ENCODE measurements at regions of chr15 and their contacts with region 1.

Region 1: DNA sequence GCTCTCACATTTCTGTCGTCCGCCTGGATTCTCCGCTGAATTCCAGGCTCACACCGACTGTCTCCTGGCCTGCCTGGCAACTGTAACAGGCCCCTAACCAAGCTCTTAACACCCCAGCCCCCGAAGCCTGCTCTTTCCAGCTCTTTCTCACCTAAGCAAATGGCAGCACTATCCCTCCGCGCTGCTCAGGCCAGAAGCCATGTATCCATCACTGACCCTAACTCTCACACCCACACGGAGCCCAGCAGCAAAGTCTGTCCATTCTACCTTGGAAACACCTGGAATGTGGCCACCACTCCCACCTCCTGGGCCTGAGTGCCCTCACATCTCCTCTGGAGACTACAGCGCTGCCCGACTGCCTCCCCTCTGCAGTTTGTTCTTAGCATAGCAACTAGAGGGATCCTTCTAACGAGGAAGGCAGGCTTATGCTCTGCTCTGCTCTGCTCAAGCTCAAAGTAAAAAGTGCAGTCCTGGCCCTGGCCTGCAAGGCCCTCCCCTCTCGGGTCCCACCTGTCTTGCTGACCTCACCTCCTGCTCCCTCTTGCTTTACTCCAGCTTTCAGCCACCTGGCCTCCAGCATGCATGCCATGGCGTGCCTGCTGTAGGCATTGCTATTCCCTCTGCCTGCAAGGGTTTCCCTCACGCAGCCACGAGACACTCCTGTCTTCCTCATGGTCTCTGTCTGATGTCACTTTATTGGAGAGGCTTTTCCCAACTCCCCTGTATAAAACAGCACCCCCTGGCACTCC is 27.2 kb downstream of the FEM1B start:
- DNase-seq: no peak
- ATAC-seq: peak; percentile 10 to 11; a peak in 3 of 6 replicates
- H3K4me3 ChIP-seq: no peak overlapping the region
- H3K27ac ChIP-seq: peak overlapping the region in 1 of 2 experiments; percentile 58; a peak in 2 of 6 replicates
- H3K4me1 ChIP-seq: peaks cover 47% of the 10 kb centered on the region
- CTCF ChIP-seq: no peak
- EP300 ChIP-seq: no peak
- POLR2A ChIP-seq: no peak
- RAD21 ChIP-seq: no peak

Region 2: DNA sequence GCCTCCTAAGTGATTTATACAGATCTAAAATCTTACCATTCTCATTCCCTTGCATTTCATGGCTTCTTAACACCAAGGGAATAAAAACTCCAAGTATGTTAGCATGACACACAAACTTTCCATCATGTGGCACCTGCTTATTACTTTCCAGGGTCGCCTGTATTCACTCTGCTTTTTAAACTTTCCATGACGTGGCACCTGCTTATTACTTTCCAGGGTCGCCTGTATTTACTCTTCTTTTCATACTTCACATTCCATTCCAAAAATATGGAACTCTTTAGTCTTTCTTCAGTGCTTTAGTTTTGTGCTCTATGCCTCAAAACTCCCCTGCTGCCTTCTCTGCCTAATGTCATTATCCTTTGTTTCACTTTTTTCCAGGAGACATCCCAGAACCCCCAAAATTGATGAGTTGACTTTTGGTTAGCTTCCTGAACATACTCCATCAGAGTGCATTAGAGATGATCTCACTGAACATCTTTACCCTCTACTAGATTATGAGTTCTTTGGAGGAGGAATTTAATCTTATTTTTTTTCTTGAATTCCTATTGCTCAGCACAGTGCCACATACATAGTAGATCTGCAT is 146.6 kb before region 1 on chr15:
- CTCF ChIA-PET with region 1: no interaction called
- POLR2A ChIA-PET with region 1: no interaction called
- DNase-seq: no peak
- ATAC-seq: no peak
- H3K4me3 ChIP-seq: no peak overlapping the region
- H3K27ac ChIP-seq: no peak overlapping the region
- H3K4me1 ChIP-seq: peaks cover 4% of the 10 kb centered on the region; the same call in 1 of the 3 replicates
- CTCF ChIP-seq: no peak
- EP300 ChIP-seq: no peak
- POLR2A ChIP-seq: no peak
- RAD21 ChIP-seq: no peak

Region 3: GRCh38 chr15:68252925-68253534 is 51.7 kb before region 1 on chr15:
- CTCF ChIA-PET with region 1: interaction called, 189 read pairs
- POLR2A ChIA-PET with region 1: interaction called, 3 read pairs
- DNase-seq: peak; percentile 82 to 88
- ATAC-seq: peak; percentile 69 to 74
- H3K4me3 ChIP-seq: no peak overlapping the region
- H3K27ac ChIP-seq: no peak overlapping the region
- H3K4me1 ChIP-seq: peaks cover 12% of the 10 kb centered on the region; the same call in 2 of the 3 replicates
- CTCF ChIP-seq: peak; percentile 96
- EP300 ChIP-seq: no peak
- POLR2A ChIP-seq: no peak
- RAD21 ChIP-seq: peak; percentile 95 to 97

Region 4: GRCh38 chr15:68316061-68316804 is 11.5 kb after region 1 on chr15:
- CTCF ChIA-PET with region 1: interaction called, 97 read pairs
- POLR2A ChIA-PET with region 1: no interaction called
- DNase-seq: peak in 1 of 2 experiments; percentile 33
- ATAC-seq: peak; percentile 39 to 75; a peak in 4 of 6 replicates
- H3K4me3 ChIP-seq: no peak overlapping the region
- H3K27ac ChIP-seq: peak overlapping the region in 1 of 2 experiments; percentile 25; a peak in 1 of 6 replicates
- H3K4me1 ChIP-seq: no peaks in the 10 kb centered on the region
- CTCF ChIP-seq: peak; percentile 55
- EP300 ChIP-seq: no peak
- POLR2A ChIP-seq: no peak
- RAD21 ChIP-seq: peak; percentile 45 to 51; a peak in 4 of 5 replicates

Region 5: DNA sequence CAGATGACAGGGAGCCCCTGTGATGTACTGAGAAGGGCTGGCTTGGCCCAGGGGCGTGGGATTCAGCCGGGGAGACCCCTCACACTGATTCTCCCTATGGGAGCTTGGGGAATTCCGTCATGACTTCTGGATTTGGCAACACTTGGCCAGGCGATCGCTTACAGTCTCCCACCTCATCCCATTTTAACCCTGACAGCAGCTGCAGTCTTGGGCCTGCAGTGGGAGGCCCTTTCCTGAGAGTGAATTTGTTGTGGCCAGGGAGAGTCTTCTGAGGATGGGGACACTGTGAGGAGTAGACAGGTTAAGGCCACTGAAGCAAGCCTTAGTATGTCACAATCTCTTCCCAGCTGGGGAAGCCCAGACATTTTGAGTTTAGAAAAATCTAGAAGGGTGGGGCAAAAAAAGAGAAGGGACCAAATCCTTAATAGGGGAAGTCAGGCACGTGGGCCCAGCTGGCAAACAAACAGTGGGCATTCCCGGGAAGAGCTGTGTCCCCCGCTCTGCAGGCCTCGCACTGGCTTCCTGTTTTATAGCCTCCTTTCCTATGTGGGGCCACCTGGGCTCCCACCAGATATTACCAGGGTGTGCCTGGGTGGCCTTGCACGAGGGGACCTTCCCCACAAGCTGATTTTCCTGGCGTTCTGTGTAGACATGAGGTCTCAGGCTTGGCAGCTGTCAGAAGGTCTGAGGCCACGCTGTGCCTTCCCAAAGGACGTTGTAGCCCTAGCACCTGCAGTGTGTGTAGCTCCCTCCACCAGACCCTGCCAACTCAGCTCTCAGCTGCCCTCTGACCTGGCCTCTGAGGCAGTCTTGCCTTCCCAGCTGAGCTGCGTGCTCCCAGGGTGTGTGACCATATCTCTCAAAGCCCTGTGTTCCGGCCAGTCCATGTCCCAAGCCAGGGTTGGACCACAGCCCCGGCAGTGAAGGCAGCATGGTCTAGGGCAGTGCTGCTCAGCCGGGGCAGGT is 37.3 kb after region 1 on chr15:
- CTCF ChIA-PET with region 1: interaction called, 58 read pairs
- POLR2A ChIA-PET with region 1: no interaction called
- DNase-seq: no peak
- ATAC-seq: peak in 1 of 2 experiments; percentile 12; a peak in 2 of 6 replicates
- H3K4me3 ChIP-seq: no peak overlapping the region
- H3K27ac ChIP-seq: peak overlapping the region; percentile 10 to 11; a peak in 2 of 6 replicates
- H3K4me1 ChIP-seq: peaks cover 11% of the 10 kb centered on the region; the same call in 1 of the 3 replicates
- CTCF ChIP-seq: no peak
- EP300 ChIP-seq: no peak
- POLR2A ChIP-seq: no peak
- RAD21 ChIP-seq: no peak

Region 6: DNA sequence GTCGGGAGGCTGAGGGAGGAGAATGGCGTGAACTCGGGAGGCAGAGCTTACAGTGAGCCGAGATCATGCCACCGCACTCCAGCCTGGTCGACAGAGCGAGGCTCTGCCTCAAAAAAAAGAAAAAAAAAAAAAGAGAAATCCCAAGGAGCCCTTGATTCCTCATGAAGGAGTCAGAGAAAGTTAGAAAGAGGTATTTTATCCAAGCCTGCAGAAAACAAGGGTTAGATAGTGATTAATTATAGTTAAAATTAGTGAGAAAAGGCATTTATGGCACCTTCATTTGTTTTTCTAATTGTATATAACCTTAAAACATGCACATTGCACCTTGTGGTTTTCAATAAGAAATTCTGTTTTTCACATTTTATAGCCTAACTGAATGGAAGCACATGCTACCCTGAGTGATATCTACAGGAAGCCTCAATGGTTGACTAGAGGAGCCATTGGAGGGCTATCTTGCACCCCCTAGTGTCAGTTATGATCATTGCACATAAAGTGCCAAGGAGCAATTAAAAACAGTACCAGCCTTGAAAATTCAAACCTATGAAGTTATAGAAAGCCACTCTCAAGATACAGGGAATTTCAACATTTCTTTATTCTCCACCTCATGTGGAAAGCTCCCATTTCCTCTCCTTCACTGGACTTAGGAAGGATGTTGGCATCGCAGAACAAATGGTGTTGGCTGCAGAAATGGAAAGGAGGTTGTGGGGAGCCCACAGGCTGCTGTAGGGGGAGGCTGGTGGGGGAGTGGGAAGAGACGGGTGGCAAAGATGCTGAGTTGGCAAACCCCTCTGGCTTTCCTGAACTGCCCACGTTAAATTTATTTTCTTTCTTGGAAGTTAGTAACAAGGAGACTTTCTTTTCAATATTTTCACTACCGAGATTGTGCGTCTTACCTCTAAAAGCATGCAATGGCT is 78.7 kb after region 1 on chr15:
- CTCF ChIA-PET with region 1: interaction called, 12 read pairs
- POLR2A ChIA-PET with region 1: no interaction called
- DNase-seq: peak; percentile 68 to 78
- ATAC-seq: peak in 1 of 2 experiments; percentile 51; a peak in 3 of 6 replicates
- H3K4me3 ChIP-seq: no peak overlapping the region
- H3K27ac ChIP-seq: peak overlapping the region; percentile 78 to 81
- H3K4me1 ChIP-seq: peaks cover 33% of the 10 kb centered on the region
- CTCF ChIP-seq: peak; percentile 66
- EP300 ChIP-seq: no peak
- POLR2A ChIP-seq: no peak
- RAD21 ChIP-seq: peak; percentile 51 to 70

Region 7: DNA sequence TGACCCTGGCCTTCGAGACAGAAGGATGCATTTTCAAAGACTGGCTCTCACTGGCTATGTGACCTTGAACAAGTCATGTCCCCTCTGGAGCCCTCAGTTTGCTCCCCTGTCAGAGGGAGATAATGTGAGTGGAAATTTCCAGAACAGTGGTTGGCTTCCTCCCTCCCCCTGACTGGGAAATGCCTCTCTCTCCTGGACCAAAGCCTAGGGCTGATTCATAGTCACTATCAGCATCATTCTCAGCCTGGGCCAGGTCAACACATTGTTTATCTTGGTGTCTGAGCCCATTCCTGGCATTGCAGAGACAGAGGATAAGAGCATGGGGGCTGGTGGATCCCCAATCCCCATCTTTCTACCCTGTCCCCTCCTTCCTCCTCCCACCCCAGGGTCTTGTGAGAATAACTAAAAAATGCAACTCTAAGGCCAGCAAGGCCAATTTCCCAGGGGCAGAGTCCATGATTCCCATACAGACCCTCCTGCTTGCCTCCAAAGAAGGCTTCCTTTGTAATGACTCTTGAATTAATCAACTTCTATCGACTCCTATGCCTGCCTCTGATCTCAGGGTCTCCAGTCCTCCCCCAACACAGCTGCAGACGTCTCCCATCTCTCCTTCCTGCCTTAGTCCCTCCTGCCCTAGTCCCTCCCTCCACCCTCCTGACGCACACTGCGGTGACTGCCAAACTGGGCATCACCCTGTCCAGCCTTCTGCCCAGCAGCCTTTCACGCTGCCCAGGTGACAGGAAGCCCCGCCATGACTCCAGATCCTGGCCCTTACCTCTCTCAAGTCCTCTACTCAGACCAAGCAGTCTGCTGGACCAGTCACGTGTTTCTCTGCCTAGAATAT is 238.6 kb after region 1 on chr15:
- CTCF ChIA-PET with region 1: interaction called, 83 read pairs
- POLR2A ChIA-PET with region 1: no interaction called
- DNase-seq: peak; percentile 82 to 96
- ATAC-seq: peak; percentile 93 to 95
- H3K4me3 ChIP-seq: no peak overlapping the region
- H3K27ac ChIP-seq: peak overlapping the region; percentile 93 to 99
- H3K4me1 ChIP-seq: peaks cover 46% of the 10 kb centered on the region
- CTCF ChIP-seq: no peak
- EP300 ChIP-seq: peak; percentile 95 to 96
- POLR2A ChIP-seq: no peak; the same call in 1 of the 2 replicates
- RAD21 ChIP-seq: peak; percentile 20 to 49; a peak in 4 of 5 replicates

Region 8: GRCh38 chr15:69939513-69940440 is 1635.0 kb after region 1 on chr15:
- CTCF ChIA-PET with region 1: no interaction called
- POLR2A ChIA-PET with region 1: no interaction called
- DNase-seq: no peak
- ATAC-seq: peak in 1 of 2 experiments; percentile 30; a peak in 2 of 6 replicates
- H3K4me3 ChIP-seq: no peak overlapping the region
- H3K27ac ChIP-seq: no peak overlapping the region
- H3K4me1 ChIP-seq: no peaks in the 10 kb centered on the region
- CTCF ChIP-seq: no peak
- EP300 ChIP-seq: no peak
- POLR2A ChIP-seq: no peak
- RAD21 ChIP-seq: no peak